ENCODE measurements at regions of chr5 and their contacts with region 1.

Region 1: DNA sequence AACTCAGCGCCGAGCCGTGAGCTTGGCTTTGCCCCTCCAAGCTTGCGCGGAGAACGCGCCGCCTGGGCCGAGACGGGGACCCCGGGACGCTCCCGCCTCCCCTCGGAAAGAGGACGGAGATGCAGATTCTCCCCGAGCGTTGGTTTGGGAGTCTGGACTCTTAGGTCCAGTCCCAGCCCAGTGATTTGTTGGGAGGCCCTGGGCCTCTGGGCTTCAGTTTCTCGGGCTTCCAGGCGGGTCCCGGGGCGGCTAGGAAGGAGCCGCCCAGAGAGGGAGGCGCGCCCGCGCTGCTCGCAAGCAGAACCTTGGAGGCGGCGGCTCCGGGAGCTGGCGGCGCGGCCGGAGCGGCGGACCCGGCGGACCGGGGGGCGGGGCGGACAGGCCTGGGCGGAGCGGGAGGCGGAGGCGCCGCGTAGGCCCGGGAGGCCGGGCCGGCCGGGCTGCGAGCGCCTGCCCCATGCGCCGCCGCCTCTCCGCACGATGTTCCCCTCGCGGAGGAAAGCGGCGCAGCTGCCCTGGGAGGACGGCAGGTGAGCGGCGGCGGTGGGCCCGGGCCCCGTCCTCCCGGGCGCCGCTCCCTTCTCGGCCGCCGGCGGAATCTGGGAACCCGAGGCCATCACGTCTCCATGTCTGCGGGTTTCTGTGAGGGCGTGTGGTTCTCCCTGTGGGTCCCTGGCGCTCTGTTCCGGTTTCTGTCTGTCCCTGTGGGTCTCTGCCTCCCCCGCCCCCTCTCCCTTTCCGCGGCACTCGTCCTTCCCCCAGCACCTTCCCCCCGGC is at the start of gene B4GALT7:
- DNase-seq: peak; percentile 87 to 91 (median 88)
- ATAC-seq: peak; percentile 93
- H3K4me3 ChIP-seq: peak within 1 kb of the TSS; percentile 79 to 89
- H3K27ac ChIP-seq: peak within 1 kb of the TSS; percentile 72 to 93 (median 85)
- H3K4me1 ChIP-seq: peaks cover 39% of the 10 kb centered on the region
- H3K27me3 ChIP-seq: no peaks in the 10 kb centered on the region
- CTCF ChIP-seq: peak in 2 of 7 experiments; percentile 20 to 29
- POLR2A ChIP-seq: peak; percentile 77 to 80 (median 80)
- total RNA-seq, gene B4GALT7: 17.1 to 17.5 TPM

Region 2: DNA sequence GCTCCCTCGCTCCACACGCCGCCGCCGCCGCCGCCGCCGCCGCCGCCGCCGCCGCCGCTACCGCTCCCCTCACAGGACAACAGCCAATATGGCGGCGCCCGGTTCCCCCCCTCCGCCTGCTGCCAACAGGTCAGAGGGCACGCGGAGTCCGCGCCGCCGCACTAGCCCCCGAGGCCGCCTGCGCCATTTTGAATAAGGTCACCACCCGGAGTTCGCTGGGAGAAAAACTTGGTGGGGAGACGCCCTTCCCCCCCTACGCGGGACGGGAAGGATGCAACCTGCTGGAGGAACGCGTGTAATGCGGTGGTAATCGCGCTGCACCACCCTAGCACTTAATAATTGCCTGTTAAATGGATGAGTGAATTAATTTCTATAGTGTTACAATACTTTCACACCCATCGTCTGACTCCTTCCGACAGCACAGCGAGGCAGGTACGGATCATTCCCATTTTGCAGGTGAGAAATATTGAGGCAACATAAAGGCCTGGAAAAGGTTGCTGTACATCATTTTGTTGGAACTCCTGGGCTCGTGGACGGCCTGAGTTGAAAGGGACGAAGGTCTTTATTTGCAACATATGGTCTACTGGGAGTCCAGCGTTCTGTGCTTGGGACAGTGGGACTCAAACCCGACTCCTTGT is 45.3 kb before region 1 on chr5 and contains the start of gene FAM193B:
- intact Hi-C with region 1: loop called (anchors 5 kb)
- DNase-seq: peak; percentile 95 to 96 (median 96)
- ATAC-seq: peak; percentile 98
- H3K4me3 ChIP-seq: peak within 1 kb of the TSS; percentile 83 to 84
- H3K27ac ChIP-seq: peak within 1 kb of the TSS; percentile 68 to 80 (median 76)
- H3K4me1 ChIP-seq: peaks cover 27% of the 10 kb centered on the region
- H3K27me3 ChIP-seq: no peaks in the 10 kb centered on the region
- CTCF ChIP-seq: peak in 5 of 7 experiments; percentile 6 to 47 (median 31)
- POLR2A ChIP-seq: peak in 2 of 3 donors; percentile 5 to 46
- total RNA-seq, gene FAM193B: 79.9 to 133 TPM